HCT116 (cell line): ENCODE measurements at regions of chrX and their contacts with region 1.

Region 1: DNA sequence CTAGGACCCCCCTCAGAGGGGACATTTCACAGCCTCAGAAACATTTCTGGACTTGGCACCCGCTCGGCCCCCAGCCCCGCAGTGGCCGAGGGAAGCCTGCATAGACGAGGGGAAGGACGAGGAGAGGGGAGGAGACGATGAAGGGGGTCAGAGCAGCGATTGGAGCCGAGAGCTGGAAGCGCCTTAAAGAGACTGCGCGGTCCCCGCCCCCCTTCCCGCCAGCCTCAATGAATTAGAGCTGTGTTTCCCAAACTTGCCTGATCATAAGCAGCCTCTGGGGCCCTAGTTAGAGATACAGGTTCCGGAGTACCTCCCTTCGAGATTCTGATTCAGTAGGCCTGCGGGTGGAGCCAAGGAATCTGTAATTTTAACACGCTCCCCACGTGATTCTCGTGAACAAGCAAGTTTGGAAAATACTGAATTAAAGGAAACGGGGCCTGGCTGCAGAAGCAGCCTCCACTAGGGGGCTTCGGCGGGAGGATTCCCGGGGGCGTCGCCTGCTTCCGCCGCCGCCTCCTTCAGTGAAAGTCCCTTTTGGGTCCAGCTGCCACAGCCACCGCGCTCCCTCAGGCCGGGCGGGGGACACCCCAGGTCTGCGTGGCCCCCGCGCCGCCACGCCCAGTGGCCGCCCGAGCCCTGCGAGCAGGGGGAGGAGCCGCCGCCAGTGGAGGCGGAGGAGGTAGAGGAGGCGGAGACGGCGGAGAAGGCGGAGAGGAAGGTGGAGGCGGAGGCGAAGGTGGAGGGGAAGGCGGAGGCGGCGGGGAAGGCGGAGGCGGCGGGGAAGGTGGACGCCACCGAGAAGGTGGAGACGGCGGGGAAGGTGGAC is at the start of gene USP27X:
- DNase-seq: peak; percentile 59
- ATAC-seq: peak; percentile 92
- H3K4me3 ChIP-seq: peak within 1 kb of the TSS; percentile 51 to 55
- H3K27ac ChIP-seq: peak within 1 kb of the TSS; percentile 61
- H3K4me1 ChIP-seq: peaks cover 4 to 9% of the 10 kb centered on the region in 2 experiments; a peak in 2 of 4 replicates
- H3K27me3 ChIP-seq: no peaks in the 10 kb centered on the region
- CTCF ChIP-seq: peak; percentile 8 to 51 (median 48); a peak in 4 of 6 replicates
- POLR2A ChIP-seq: no peak
- RAD21 ChIP-seq: no peak
- total RNA-seq, gene USP27X: 3.5 TPM

Region 2: GRCh38 chrX:49704691-49705404 is 174.2 kb before region 1 on chrX:
- CTCF ChIA-PET with region 1: no interaction called
- POLR2A ChIA-PET with region 1: no interaction called
- RAD21 ChIA-PET with region 1: no interaction called
- intact Hi-C with region 1: no loop called
- DNase-seq: no peak
- ATAC-seq: no peak
- H3K4me3 ChIP-seq: no peak overlapping the region
- H3K27ac ChIP-seq: no peak overlapping the region
- H3K4me1 ChIP-seq: no peaks in the 10 kb centered on the region
- H3K27me3 ChIP-seq: peaks cover 57% of the 10 kb centered on the region
- CTCF ChIP-seq: no peak
- POLR2A ChIP-seq: no peak
- RAD21 ChIP-seq: no peak

Region 3: DNA sequence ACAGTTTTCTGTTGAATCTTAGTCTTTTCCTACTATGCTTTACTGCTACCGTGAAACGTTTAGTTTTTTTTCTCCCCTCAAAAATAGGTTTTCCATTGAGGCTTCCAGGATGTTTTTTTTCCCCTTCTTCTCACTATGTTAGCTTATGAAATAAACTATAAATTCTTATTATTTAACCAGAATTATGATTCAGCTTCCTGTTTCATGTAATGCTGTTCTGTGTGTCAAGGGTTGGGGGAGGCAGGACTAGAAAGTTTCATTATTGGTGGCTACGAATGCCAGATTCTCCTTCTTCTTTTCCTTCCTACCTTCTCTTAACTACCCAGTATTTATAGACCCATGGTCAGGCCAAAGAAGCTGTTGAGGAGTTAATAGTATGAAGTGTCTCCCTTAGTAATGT is 55.1 kb after region 1 on chrX:
- CTCF ChIA-PET with region 1: no interaction called
- POLR2A ChIA-PET with region 1: no interaction called
- RAD21 ChIA-PET with region 1: no interaction called
- intact Hi-C with region 1: no loop called
- DNase-seq: no peak
- ATAC-seq: no peak
- H3K4me3 ChIP-seq: no peak overlapping the region
- H3K27ac ChIP-seq: no peak overlapping the region
- H3K4me1 ChIP-seq: no peaks in the 10 kb centered on the region; a peak in 1 of 4 replicates
- H3K27me3 ChIP-seq: no peaks in the 10 kb centered on the region
- CTCF ChIP-seq: no peak
- POLR2A ChIP-seq: no peak
- RAD21 ChIP-seq: no peak

Region 4: GRCh38 chrX:50579955-50580354 is 700.9 kb after region 1 on chrX:
- CTCF ChIA-PET with region 1: no interaction called
- POLR2A ChIA-PET with region 1: no interaction called
- RAD21 ChIA-PET with region 1: no interaction called
- intact Hi-C with region 1: loop called (anchors 10 kb)
- DNase-seq: peak; percentile 59
- ATAC-seq: peak; percentile 88
- H3K4me3 ChIP-seq: no peak overlapping the region
- H3K27ac ChIP-seq: no peak overlapping the region
- H3K4me1 ChIP-seq: no peaks in the 10 kb centered on the region
- H3K27me3 ChIP-seq: peaks cover 3% of the 10 kb centered on the region; the same call in 1 of the 2 replicates
- CTCF ChIP-seq: peak; percentile 23 to 55 (median 33); a peak in 4 of 6 replicates
- POLR2A ChIP-seq: no peak
- RAD21 ChIP-seq: peak; percentile 56